H1 (cell line): ENCODE measurements at regions of chr2 and their contacts with region 1.

Region 1: GRCh38 chr2:162221064-162221463 is 22.2 kb downstream of the FAP start:
- DNase-seq: peak; percentile 73 to 91
- H3K4me3 ChIP-seq: no peak overlapping the region
- H3K27ac ChIP-seq: no peak overlapping the region
- H3K4me1 ChIP-seq: no peaks in the 10 kb centered on the region
- H3K27me3 ChIP-seq: no peaks in the 10 kb centered on the region
- CTCF ChIP-seq: peak; percentile 88 to 96 (median 89)
- EP300 ChIP-seq: no peak
- POLR2A ChIP-seq: no peak
- RAD21 ChIP-seq: peak; percentile 84 to 87

Region 2: DNA sequence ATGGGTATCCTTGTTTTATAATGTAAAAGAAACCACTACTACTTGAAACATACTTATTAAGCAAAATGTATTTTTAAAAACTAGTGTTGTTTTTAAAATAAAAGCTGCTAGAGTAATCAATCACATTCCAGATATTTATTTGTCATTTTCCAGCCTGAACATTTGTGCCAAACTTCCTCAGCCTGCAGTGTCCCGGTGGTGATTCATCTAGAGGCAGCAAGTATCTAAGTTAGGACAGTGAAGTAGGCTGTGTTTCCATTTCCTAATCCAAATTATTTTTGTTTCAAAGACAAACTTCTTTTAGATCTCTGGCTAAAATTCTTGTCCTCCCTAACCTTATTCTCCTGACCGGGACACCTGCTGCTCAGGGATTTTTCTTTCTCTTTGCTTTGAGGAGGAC is 56.3 kb before region 1 on chr2:
- CTCF ChIA-PET with region 1: interaction called, 12 read pairs
- POLR2A ChIA-PET with region 1: no interaction called
- DNase-seq: no peak
- H3K4me3 ChIP-seq: no peak overlapping the region
- H3K27ac ChIP-seq: no peak overlapping the region
- H3K4me1 ChIP-seq: no peaks in the 10 kb centered on the region
- H3K27me3 ChIP-seq: no peaks in the 10 kb centered on the region
- CTCF ChIP-seq: no peak
- EP300 ChIP-seq: no peak
- POLR2A ChIP-seq: no peak
- RAD21 ChIP-seq: no peak

Region 3: GRCh38 chr2:162196638-162197037 is 24.4 kb before region 1 on chr2:
- CTCF ChIA-PET with region 1: interaction called, 14 read pairs
- POLR2A ChIA-PET with region 1: no interaction called
- DNase-seq: no peak
- H3K4me3 ChIP-seq: no peak overlapping the region
- H3K27ac ChIP-seq: no peak overlapping the region
- H3K4me1 ChIP-seq: no peaks in the 10 kb centered on the region
- H3K27me3 ChIP-seq: peaks cover 0 to 1% (median 0%) of the 10 kb centered on the region in 4 experiments; a peak in 1 of 7 replicates
- CTCF ChIP-seq: no peak
- EP300 ChIP-seq: no peak
- POLR2A ChIP-seq: no peak
- RAD21 ChIP-seq: no peak

Region 4: GRCh38 chr2:162243294-162243693 is 22.2 kb after region 1 on chr2 and contains the start of gene FAP:
- CTCF ChIA-PET with region 1: interaction called, 20 read pairs
- POLR2A ChIA-PET with region 1: no interaction called
- DNase-seq: no peak
- H3K4me3 ChIP-seq: no peak within 1 kb of the TSS
- H3K27ac ChIP-seq: no peak within 1 kb of the TSS
- H3K4me1 ChIP-seq: no peaks in the 10 kb centered on the region
- H3K27me3 ChIP-seq: no peaks in the 10 kb centered on the region
- CTCF ChIP-seq: no peak
- EP300 ChIP-seq: no peak
- POLR2A ChIP-seq: no peak
- RAD21 ChIP-seq: no peak
- total RNA-seq, gene FAP: not detected in 2 replicates

Region 5: DNA sequence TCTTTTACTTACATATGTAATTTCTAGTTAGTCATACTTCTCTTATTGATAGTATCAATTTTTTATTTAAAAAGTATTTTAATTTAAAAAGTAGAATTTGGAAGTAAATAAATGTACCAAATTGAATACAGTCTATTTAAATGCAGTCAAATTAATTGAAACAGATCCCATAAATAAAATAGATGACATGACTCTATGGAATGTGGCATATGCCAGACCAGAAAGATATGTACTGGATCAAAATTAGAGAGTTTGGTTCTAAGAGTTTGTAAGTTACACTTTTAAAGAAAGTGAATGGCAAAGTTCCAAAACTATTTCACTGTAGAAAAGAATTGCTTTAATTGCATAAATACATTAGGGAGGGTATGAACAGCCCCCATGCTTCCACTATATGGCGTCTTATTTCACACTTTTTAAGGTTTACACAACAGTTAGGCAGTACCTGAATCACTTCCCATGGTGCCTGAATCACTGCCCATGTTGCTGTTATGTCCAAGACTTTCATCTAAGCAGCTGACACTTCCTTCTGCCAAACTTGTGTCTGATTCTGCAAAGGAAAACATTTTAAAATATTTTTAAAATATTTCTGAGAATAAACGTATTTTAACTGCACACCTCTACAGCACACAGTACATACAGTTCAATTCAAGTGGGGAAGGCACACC is 72.2 kb after region 1 on chr2:
- CTCF ChIA-PET with region 1: interaction called, 188 read pairs
- POLR2A ChIA-PET with region 1: no interaction called
- DNase-seq: no peak
- H3K4me3 ChIP-seq: no peak overlapping the region
- H3K27ac ChIP-seq: no peak overlapping the region
- H3K4me1 ChIP-seq: no peaks in the 10 kb centered on the region
- H3K27me3 ChIP-seq: no peaks in the 10 kb centered on the region
- CTCF ChIP-seq: no peak
- EP300 ChIP-seq: no peak
- POLR2A ChIP-seq: no peak
- RAD21 ChIP-seq: no peak

Region 6: GRCh38 chr2:162333968-162334367 is 112.9 kb after region 1 on chr2:
- CTCF ChIA-PET with region 1: interaction called, 11 read pairs
- POLR2A ChIA-PET with region 1: no interaction called
- DNase-seq: no peak
- H3K4me3 ChIP-seq: no peak overlapping the region
- H3K27ac ChIP-seq: no peak overlapping the region
- H3K4me1 ChIP-seq: no peaks in the 10 kb centered on the region
- H3K27me3 ChIP-seq: no peaks in the 10 kb centered on the region
- CTCF ChIP-seq: peak; percentile 13 to 62 (median 39); a peak in 3 of 4 replicates
- EP300 ChIP-seq: no peak
- POLR2A ChIP-seq: no peak
- RAD21 ChIP-seq: peak; percentile 49 to 60